CD8-positive, alpha-beta T cell (primary cell): ENCODE measurements at regions of chr22 and their contacts with region 1.

Region 1: DNA sequence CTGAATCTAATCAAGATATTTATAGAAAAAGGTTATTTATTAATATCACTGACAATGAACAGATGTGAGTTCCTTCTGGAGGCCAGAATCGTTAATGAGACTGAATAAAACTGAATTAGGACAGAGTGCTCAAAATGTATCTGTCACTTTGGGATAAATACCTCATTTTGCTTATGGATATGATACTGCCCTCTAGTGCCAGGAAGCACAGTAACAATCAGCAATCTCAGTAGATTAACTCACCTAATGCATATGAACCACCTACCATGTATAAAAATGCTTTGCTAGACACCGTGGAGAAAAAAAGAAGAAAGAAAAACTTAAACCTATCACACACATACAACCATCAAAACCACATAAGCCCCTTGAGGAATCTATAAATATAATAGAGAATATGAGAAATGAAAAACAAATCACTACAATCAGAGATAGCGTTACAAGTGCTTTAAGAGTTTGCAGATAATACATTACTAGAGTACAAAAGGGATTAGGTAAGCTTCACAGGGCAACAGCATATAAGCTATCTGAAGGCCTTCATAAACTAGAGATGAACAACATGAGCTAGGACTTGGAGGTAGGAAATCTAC is 117.4 kb downstream of the SGSM3 start:
- DNase-seq: peak in 2 of 9 experiments; percentile 44 to 65
- ATAC-seq: peak; percentile 53
- H3K4me3 ChIP-seq: no peak overlapping the region
- H3K4me3 Mint-ChIP-seq: no peak overlapping the region
- H3K27ac ChIP-seq: no peak overlapping the region
- H3K27ac Mint-ChIP-seq: no peak overlapping the region
- H3K4me1 ChIP-seq: peaks cover 31% of the 10 kb centered on the region
- H3K4me1 Mint-ChIP-seq: peaks cover 43% of the 10 kb centered on the region
- H3K27me3 ChIP-seq: no peaks in the 10 kb centered on the region
- H3K27me3 Mint-ChIP-seq: no peaks in the 10 kb centered on the region
- CTCF ChIP-seq: peak; percentile 95

Region 2: GRCh38 chr22:39908737-39909136 is 579.0 kb before region 1 on chr22:
- CTCF ChIA-PET with region 1: no interaction called
- POLR2A ChIA-PET with region 1: no interaction called
- intact Hi-C with region 1: no loop called
- DNase-seq: peak in 5 of 9 experiments; percentile 48 to 72 (median 53)
- ATAC-seq: peak; percentile 51
- H3K4me3 ChIP-seq: peak overlapping the region; percentile 57 to 77
- H3K4me3 Mint-ChIP-seq: peak overlapping the region; percentile 97
- H3K27ac ChIP-seq: peak overlapping the region; percentile 20 to 80
- H3K27ac Mint-ChIP-seq: peak overlapping the region; percentile 97
- H3K4me1 ChIP-seq: peaks cover 61% of the 10 kb centered on the region
- H3K4me1 Mint-ChIP-seq: peaks cover 79% of the 10 kb centered on the region
- H3K27me3 ChIP-seq: no peaks in the 10 kb centered on the region
- H3K27me3 Mint-ChIP-seq: no peaks in the 10 kb centered on the region
- CTCF ChIP-seq: no peak

Region 3: DNA sequence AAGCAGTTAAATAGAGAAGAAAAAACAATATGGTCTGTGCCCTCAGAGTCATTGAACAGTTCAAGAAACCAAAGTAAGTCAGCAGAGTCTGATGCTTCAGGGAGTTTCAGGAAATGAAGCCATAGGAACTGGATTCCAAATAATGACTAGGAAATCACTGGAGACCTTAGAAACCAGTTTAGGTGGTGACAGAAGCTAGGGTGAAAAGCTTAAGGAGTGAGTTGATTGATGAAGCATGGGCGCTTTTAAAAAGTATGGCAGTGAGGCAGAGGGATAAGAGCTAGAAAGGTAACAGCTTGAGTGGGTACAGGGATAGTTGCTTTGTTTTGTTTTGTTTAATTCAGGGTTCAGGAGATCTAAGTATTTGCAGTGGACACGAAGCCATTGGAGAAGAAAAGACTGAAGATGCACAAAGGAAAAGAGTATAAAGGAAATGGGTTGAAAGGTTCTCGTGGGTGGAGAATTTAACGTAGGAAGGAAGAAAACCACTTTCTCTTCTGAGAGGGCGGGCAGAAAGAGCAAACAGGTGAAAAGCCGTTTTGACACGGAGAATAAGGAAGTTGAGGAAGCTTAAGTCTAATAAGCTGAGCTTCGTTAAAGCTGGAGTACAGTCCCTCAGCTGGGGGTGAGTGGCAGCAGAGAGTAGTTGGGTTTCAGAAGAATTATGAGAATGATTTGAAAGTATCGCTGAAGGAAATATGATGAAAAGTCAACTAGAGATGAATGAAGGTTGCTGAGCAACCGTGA is 102.5 kb before region 1 on chr22:
- CTCF ChIA-PET with region 1: interaction called, 3 read pairs
- POLR2A ChIA-PET with region 1: no interaction called
- intact Hi-C with region 1: loop called in 1 of 2 experiments (anchors 10 kb)
- DNase-seq: peak in 5 of 9 experiments; percentile 29 to 78 (median 56)
- ATAC-seq: peak; percentile 95
- H3K4me3 ChIP-seq: peak overlapping the region; percentile 28 to 38
- H3K4me3 Mint-ChIP-seq: peak overlapping the region; percentile 85
- H3K27ac ChIP-seq: peak overlapping the region; percentile 52 to 79
- H3K27ac Mint-ChIP-seq: peak overlapping the region; percentile 96
- H3K4me1 ChIP-seq: peaks cover 51% of the 10 kb centered on the region
- H3K4me1 Mint-ChIP-seq: peaks cover 63% of the 10 kb centered on the region
- H3K27me3 ChIP-seq: no peaks in the 10 kb centered on the region
- H3K27me3 Mint-ChIP-seq: no peaks in the 10 kb centered on the region
- CTCF ChIP-seq: no peak

Region 4: DNA sequence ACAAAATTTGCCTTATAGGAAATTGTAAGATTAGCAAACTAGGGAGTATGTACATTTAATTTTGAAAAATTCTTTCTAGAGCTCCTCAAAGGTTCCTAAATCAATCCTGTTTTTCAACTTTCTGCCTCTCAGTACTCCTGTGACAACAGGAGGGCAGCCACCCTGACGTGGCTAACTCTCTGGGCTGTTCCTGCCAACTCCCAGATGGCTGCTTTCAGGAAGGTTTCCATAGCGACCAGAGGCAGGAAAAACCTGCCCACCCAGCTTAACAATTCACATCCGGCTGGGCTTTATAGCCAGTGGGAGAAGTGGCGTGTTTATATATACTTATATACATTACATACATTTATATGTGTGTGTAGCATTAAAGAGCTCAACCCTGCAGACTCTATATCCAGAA is 90.9 kb before region 1 on chr22:
- CTCF ChIA-PET with region 1: no interaction called
- POLR2A ChIA-PET with region 1: no interaction called
- intact Hi-C with region 1: no loop called
- DNase-seq: no peak
- ATAC-seq: no peak
- H3K4me3 ChIP-seq: no peak overlapping the region
- H3K4me3 Mint-ChIP-seq: no peak overlapping the region
- H3K27ac ChIP-seq: peak overlapping the region in 1 of 2 experiments; percentile 37
- H3K27ac Mint-ChIP-seq: peak overlapping the region; percentile 83
- H3K4me1 ChIP-seq: peaks cover 62% of the 10 kb centered on the region
- H3K4me1 Mint-ChIP-seq: peaks cover 78% of the 10 kb centered on the region
- H3K27me3 ChIP-seq: no peaks in the 10 kb centered on the region
- H3K27me3 Mint-ChIP-seq: no peaks in the 10 kb centered on the region
- CTCF ChIP-seq: no peak

Region 5: DNA sequence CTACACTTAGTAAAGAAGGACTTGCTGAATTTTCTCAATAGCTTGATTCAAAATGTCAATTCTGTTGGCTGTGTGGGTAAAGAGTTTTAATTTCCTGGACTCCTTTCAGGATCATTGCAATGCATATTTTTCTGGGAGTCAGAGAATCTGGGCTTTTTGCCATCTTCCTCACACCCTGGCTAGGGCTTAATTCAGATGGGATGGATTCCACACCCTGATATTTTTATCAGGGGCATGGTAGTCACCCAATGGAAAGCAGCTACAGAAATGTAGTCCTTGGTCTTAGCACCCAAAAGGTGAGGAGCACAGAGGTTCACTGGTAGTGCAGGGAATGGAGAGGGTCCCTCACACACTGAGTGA is 38.1 kb before region 1 on chr22:
- CTCF ChIA-PET with region 1: interaction called, 11 read pairs
- POLR2A ChIA-PET with region 1: no interaction called
- intact Hi-C with region 1: no loop called
- DNase-seq: no peak
- ATAC-seq: no peak
- H3K4me3 ChIP-seq: no peak overlapping the region
- H3K4me3 Mint-ChIP-seq: peak overlapping the region; percentile 35
- H3K27ac ChIP-seq: no peak overlapping the region
- H3K27ac Mint-ChIP-seq: peak overlapping the region; percentile 61
- H3K4me1 ChIP-seq: peaks cover 86% of the 10 kb centered on the region
- H3K4me1 Mint-ChIP-seq: peaks cover 81% of the 10 kb centered on the region
- H3K27me3 ChIP-seq: no peaks in the 10 kb centered on the region
- H3K27me3 Mint-ChIP-seq: no peaks in the 10 kb centered on the region
- CTCF ChIP-seq: no peak

Region 6: GRCh38 chr22:40463017-40463631 is 24.6 kb before region 1 on chr22:
- CTCF ChIA-PET with region 1: interaction called, 16 read pairs
- POLR2A ChIA-PET with region 1: no interaction called
- intact Hi-C with region 1: no loop called
- DNase-seq: peak in 8 of 9 experiments; percentile 22 to 74 (median 47)
- ATAC-seq: peak; percentile 81
- H3K4me3 ChIP-seq: peak overlapping the region; percentile 72 to 73
- H3K4me3 Mint-ChIP-seq: peak overlapping the region; percentile 98
- H3K27ac ChIP-seq: peak overlapping the region; percentile 70 to 71
- H3K27ac Mint-ChIP-seq: peak overlapping the region; percentile 98
- H3K4me1 ChIP-seq: peaks cover 51% of the 10 kb centered on the region
- H3K4me1 Mint-ChIP-seq: peaks cover 63% of the 10 kb centered on the region
- H3K27me3 ChIP-seq: no peaks in the 10 kb centered on the region
- H3K27me3 Mint-ChIP-seq: no peaks in the 10 kb centered on the region
- CTCF ChIP-seq: no peak

Region 7: DNA sequence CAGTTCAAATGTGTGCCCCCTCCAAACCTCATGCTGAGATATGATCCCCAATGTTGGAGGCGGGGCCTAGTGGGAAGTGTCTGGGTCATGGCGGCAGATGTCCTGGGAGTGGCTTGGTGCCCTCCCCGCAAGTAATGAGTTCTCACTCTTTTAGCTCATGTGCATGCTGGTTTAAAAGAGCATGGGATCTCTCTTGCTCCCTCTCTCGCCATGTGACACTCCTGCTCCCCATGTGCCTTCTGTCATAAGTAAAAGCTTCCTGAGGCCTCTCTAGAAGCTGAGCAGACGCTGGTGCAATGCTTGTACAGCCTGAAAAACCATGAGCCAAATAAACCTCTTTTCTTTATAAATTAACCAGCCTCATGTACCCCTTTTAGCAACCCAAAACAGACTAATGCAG is 18.6 kb before region 1 on chr22:
- CTCF ChIA-PET with region 1: interaction called, 16 read pairs
- POLR2A ChIA-PET with region 1: no interaction called
- intact Hi-C with region 1: no loop called
- DNase-seq: no peak
- ATAC-seq: no peak
- H3K4me3 ChIP-seq: no peak overlapping the region
- H3K4me3 Mint-ChIP-seq: no peak overlapping the region
- H3K27ac ChIP-seq: no peak overlapping the region
- H3K27ac Mint-ChIP-seq: peak overlapping the region; percentile 8
- H3K4me1 ChIP-seq: peaks cover 11% of the 10 kb centered on the region
- H3K4me1 Mint-ChIP-seq: peaks cover 31% of the 10 kb centered on the region
- H3K27me3 ChIP-seq: no peaks in the 10 kb centered on the region
- H3K27me3 Mint-ChIP-seq: no peaks in the 10 kb centered on the region
- CTCF ChIP-seq: no peak